Mammary epithelial cell (primary cell): ENCODE measurements at regions of chr7 and their contacts with region 1.

Region 1: GRCh38 chr7:148773334-148773733 is 74.6 kb downstream of the CUL1 start:
- DNase-seq: no peak
- H3K4me3 ChIP-seq: no peak overlapping the region
- H3K27ac ChIP-seq: peak overlapping the region; percentile 32
- H3K4me1 ChIP-seq: peaks cover 14% of the 10 kb centered on the region
- H3K27me3 ChIP-seq: no peaks in the 10 kb centered on the region
- CTCF ChIP-seq: no peak

Region 2: DNA sequence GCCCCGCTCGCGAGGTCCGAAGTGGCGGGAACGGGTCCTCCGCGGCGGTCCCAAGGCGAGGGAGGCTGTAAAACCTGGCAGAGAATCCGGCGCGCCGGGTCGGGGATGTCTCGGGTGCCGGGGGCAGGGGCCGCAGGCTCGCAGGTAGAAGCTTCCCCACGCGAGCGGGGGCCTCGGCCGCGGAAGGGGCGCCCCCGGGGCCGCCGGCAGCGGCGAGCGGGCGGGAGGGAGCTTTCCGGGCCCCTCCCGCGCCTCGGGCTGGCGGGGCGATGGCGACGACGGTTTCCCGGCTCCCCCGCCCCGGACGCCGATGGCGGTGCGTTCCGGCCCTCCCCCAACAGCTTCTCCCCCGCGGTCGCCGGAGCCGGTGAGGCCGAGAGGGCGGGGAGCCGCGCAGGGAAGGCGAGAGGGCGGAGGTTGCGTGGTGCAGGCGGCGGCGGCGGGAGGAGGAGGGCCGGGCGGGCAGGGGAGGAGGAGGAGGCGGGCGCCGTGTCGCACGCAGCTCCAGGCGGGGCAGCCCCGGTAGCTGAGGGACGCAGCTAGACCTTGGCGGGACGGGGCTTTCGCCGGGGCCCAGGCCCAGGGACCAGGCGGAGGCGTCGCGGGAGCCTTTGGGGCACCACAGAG is 74.8 kb before region 1 on chr7 and contains the start of gene CUL1:
- CTCF ChIA-PET with region 1: no interaction called
- dilution Hi-C with region 1: no loop called
- in situ Hi-C with region 1: no loop called
- intact Hi-C with region 1: loop called (anchors 1 kb)
- DNase-seq: peak; percentile 79
- H3K4me3 ChIP-seq: peak within 1 kb of the TSS; percentile 49 to 85 (median 79)
- H3K27ac ChIP-seq: peak within 1 kb of the TSS; percentile 89
- H3K4me1 ChIP-seq: peaks cover 48% of the 10 kb centered on the region
- H3K27me3 ChIP-seq: no peaks in the 10 kb centered on the region
- CTCF ChIP-seq: no peak
- total RNA-seq, gene CUL1: 53.5 to 54.9 TPM